ENCODE measurements at regions of chr10 and their contacts with region 1.

Region 1: GRCh38 chr10:73879296-73880173 is 5.2 kb upstream of the CAMK2G start:
- DNase-seq: no peak
- H3K4me3 ChIP-seq: no peak overlapping the region
- CTCF ChIP-seq: peak; percentile 96

Region 2: DNA sequence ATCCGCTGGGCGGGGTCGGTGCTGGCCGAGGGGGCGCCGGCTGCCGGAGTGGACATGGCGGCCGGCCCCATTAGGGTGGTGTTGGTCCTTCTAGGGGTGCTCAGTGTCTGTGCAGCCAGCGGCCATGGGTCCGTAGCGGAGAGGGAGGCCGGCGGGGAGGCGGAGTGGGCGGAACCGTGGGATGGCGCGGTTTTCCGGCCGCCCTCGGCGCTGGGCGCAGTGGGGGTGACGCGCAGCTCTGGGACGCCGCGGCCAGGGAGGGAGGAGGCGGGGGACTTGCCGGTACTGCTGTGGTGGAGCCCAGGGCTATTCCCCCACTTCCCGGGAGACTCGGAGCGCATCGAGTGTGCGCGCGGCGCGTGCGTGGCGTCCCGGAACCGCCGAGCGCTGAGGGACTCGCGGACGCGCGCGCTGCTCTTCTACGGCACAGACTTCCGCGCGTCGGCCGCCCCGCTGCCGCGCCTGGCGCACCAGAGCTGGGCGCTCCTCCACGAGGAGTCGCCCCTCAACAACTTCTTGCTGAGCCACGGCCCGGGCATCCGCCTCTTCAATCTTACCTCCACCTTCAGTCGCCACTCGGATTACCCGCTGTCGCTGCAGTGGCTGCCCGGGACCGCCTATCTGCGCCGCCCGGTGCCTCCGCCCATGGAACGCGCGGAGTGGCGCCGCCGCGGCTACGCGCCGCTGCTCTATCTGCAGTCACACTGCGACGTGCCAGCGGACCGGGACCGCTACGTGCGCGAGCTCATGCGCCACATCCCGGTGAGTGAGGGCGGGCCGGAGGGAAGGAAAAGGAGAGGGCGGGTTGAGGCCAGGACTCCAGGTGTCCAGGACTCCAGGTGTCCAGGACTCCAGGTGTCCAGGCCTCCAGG is 107.0 kb before region 1 on chr10:
- CTCF ChIA-PET with region 1: interaction called, 34 read pairs
- POLR2A ChIA-PET with region 1: no interaction called
- DNase-seq: peak; percentile 19
- H3K4me3 ChIP-seq: peak overlapping the region; percentile 79
- CTCF ChIP-seq: no peak

Region 3: DNA sequence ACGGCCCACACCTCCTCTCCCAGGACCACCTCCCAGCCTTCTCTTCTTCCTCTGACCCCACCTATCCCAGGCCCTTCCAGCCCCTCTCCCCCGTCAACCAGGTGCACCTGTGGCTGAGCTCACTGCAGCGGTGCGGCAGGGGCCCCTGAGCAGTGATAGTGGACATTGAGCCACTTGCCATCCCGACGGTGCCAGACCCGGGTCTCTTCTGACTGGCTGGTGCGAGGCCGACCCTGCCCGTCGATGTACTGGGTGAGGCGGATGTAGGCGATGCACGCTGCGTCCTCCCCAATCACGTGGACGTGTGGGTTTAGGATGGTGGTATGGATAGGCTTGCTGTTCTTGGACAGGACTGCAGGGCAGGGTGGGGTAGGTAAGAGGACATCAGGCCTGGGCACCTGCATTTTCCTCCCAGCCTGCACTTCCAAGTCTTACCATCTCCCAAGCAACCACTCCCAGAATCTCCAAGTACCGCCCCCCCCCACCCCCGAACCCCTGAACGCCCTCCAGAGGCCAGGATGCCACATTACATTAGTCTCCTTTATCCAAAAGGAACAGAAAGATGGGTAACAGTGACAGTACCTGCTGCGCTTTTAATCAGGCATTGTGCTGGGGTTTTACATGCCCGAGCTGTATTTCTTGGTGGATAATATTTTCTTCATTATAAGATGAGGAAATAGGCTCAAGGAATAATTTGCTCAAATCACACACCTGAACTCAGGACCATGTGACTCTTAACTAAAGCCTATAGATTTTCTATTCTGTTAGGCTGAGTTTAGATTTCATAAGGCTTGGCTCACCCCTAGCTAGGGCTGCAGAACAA is 64.4 kb before region 1 on chr10:
- CTCF ChIA-PET with region 1: interaction called, 11 read pairs
- POLR2A ChIA-PET with region 1: no interaction called
- DNase-seq: no peak
- H3K4me3 ChIP-seq: no peak overlapping the region
- CTCF ChIP-seq: no peak

Region 4: GRCh38 chr10:73857446-73857845 is 22.1 kb before region 1 on chr10:
- CTCF ChIA-PET with region 1: interaction called, 518 read pairs
- POLR2A ChIA-PET with region 1: no interaction called
- DNase-seq: no peak
- H3K4me3 ChIP-seq: no peak overlapping the region
- CTCF ChIP-seq: no peak

Region 5: GRCh38 chr10:73920089-73920488 is 40.6 kb after region 1 on chr10:
- CTCF ChIA-PET with region 1: interaction called, 15 read pairs
- POLR2A ChIA-PET with region 1: no interaction called
- DNase-seq: no peak
- H3K4me3 ChIP-seq: no peak overlapping the region
- CTCF ChIP-seq: no peak

Region 6: GRCh38 chr10:74088722-74089121 is 209.2 kb after region 1 on chr10:
- CTCF ChIA-PET with region 1: interaction called, 14 read pairs
- POLR2A ChIA-PET with region 1: no interaction called
- DNase-seq: no peak
- H3K4me3 ChIP-seq: no peak overlapping the region
- CTCF ChIP-seq: no peak

Region 7: DNA sequence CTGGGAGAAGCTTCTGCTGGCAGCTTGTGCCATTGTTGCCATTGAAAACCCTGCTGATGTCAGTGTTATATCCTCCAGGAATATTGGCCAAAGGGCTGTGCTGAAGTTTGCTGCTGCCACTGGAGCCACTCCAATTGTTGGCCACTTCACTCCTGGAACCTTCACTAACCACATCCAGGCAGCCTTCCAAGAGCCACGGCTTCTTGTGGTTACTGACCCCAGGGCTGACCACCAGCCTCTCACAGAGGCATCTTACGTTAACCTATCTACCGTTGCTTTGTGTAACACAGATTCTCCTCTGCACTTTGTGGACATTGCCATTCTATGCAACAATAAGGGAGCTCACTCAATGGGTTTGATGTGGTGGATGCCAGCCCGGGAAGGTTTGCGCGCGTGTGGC is 492.2 kb after region 1 on chr10:
- CTCF ChIA-PET with region 1: no interaction called
- POLR2A ChIA-PET with region 1: no interaction called
- DNase-seq: no peak
- H3K4me3 ChIP-seq: no peak overlapping the region
- CTCF ChIP-seq: no peak